Activated T-helper 1 cell treated with anti-CD3 and anti-CD28 coated beads, Interleukin-12 subunit alpha, Interleukin-12 subunit beta, Interleukin-2, Interleukin-4 antibody, amounts not matched to agents 30 ng/mL and 10 ng/mL and 1 ng/mL, durations not matched to agents 14 hours and 24 hours and 36 hours (primary cell): ENCODE measurements at regions of chr10 and their contacts with region 1.

Region 1: GRCh38 chr10:8331883-8332729 is 277.6 kb downstream of the GATA3 start:
- DNase-seq: peak; percentile 78
- H3K4me3 Mint-ChIP-seq: peak overlapping the region; percentile 79
- H3K27ac Mint-ChIP-seq: peak overlapping the region; percentile 75
- H3K4me1 Mint-ChIP-seq: peaks cover 58% of the 10 kb centered on the region
- H3K27me3 Mint-ChIP-seq: peaks cover 6% of the 10 kb centered on the region

Region 2: DNA sequence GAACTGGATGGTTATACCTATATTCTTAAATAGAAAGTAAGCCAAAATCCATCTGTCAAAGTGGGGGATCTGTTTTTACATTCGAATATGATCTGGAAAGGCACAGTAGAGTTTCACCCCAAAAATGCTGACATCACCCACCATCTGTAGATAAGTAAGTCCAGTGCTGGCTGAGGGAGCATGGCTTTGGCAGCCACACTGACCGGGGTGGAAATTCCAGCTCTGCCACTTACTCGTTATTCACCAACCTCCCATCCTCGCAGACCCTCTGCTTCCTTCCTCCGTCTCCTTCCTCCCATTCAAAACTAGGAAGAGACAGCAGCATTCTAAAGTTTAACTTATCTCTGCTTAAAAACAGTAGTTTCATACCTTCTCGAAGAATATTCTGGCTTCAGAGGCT is 362.5 kb before region 1 on chr10:
- intact Hi-C with region 1: no loop called
- DNase-seq: no peak
- H3K4me3 Mint-ChIP-seq: no peak overlapping the region
- H3K27ac Mint-ChIP-seq: no peak overlapping the region
- H3K4me1 Mint-ChIP-seq: peaks cover 6% of the 10 kb centered on the region
- H3K27me3 Mint-ChIP-seq: no peaks in the 10 kb centered on the region

Region 3: DNA sequence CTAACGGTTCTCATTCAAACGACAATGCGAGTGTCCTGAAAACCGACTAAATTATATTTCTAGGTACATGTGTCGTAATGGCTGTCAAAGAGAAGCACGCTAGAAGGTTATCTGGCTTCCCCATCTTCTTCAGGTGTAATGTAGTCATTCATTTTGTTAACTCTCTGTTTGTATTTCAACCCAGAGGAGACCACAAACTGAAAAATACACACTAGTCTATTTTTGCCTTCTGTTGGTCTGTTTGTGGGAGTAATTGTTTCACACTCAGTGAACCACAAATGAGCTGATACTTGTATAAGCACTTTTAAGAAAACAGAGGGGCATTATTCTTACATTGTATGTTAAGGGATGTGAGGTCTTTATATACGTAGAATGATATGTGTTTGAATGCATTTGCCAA is 28.3 kb after region 1 on chr10:
- intact Hi-C with region 1: loop called (anchors 1 kb)
- DNase-seq: no peak
- H3K4me3 Mint-ChIP-seq: peak overlapping the region; percentile 32
- H3K27ac Mint-ChIP-seq: peak overlapping the region; percentile 78
- H3K4me1 Mint-ChIP-seq: peaks cover 56% of the 10 kb centered on the region
- H3K27me3 Mint-ChIP-seq: peaks cover 9% of the 10 kb centered on the region

Region 4: GRCh38 chr10:8554574-8554973 is 222.5 kb after region 1 on chr10:
- intact Hi-C with region 1: no loop called
- DNase-seq: no peak
- H3K4me3 Mint-ChIP-seq: no peak overlapping the region
- H3K27ac Mint-ChIP-seq: no peak overlapping the region
- H3K4me1 Mint-ChIP-seq: no peaks in the 10 kb centered on the region
- H3K27me3 Mint-ChIP-seq: peaks cover 4% of the 10 kb centered on the region

Region 5: GRCh38 chr10:9097206-9097985 is 765.3 kb after region 1 on chr10:
- intact Hi-C with region 1: loop called (anchors 10 kb)
- DNase-seq: no peak
- H3K4me3 Mint-ChIP-seq: no peak overlapping the region
- H3K27ac Mint-ChIP-seq: no peak overlapping the region
- H3K4me1 Mint-ChIP-seq: peaks cover 6% of the 10 kb centered on the region
- H3K27me3 Mint-ChIP-seq: no peaks in the 10 kb centered on the region